ENCODE measurements at regions of chr4 and their contacts with region 1.

Region 1: GRCh38 chr4:44425614-44426208 is 22.9 kb downstream of the KCTD8 start:
- DNase-seq: peak; percentile 66
- ATAC-seq: peak; percentile 71
- H3K4me3 ChIP-seq: no peak overlapping the region
- H3K27ac ChIP-seq: no peak overlapping the region
- H3K4me1 ChIP-seq: no peaks in the 10 kb centered on the region
- H3K27me3 ChIP-seq: no peaks in the 10 kb centered on the region
- CTCF ChIP-seq: peak; percentile 82

Region 2: DNA sequence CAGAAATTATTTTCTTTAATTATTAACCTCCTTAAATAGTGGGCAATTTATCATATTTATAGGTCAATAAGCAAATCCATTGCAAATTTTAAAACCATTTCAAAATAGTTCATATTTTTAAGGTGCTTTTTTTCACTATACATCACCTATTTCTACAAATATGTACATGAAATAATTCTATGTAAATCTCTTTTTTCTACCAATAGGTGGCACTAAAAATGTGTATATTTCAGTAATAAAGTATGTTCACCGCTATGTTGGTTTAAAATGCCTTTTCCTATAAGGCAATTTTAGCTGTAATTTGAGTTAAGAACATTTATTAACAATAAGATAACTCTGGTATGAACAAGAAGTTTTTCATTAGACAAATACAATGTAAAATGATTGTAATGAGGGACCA is 649.3 kb before region 1 on chr4:
- CTCF ChIA-PET with region 1: interaction called, 3 read pairs
- POLR2A ChIA-PET with region 1: no interaction called
- intact Hi-C with region 1: loop called (anchors 1 kb)
- DNase-seq: peak; percentile 52
- ATAC-seq: no peak
- H3K4me3 ChIP-seq: no peak overlapping the region
- H3K27ac ChIP-seq: no peak overlapping the region
- H3K4me1 ChIP-seq: no peaks in the 10 kb centered on the region
- H3K27me3 ChIP-seq: no peaks in the 10 kb centered on the region
- CTCF ChIP-seq: peak; percentile 59

Region 3: DNA sequence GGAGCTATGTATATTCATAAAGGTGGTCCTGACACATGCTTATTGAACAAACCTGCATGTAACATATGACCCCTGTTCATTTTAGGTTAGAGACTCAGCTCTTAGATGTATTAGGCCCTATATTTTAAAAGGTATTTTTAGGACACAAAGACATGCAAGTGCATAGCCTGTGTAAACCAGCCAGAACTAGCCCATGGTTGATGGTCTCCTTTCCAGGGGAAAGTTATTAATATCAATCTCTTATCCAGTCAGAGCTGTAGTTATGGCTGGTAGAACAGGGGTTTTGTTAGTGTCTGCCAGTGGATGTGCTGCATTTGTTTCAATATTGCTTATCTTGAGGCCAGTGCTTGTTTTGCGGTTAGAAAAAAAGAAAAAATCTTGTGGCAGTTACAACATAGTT is 465.7 kb before region 1 on chr4:
- CTCF ChIA-PET with region 1: no interaction called
- POLR2A ChIA-PET with region 1: no interaction called
- intact Hi-C with region 1: loop called (anchors 10 kb)
- DNase-seq: no peak
- ATAC-seq: no peak
- H3K4me3 ChIP-seq: no peak overlapping the region
- H3K27ac ChIP-seq: no peak overlapping the region
- H3K4me1 ChIP-seq: no peaks in the 10 kb centered on the region
- H3K27me3 ChIP-seq: no peaks in the 10 kb centered on the region
- CTCF ChIP-seq: no peak

Region 4: DNA sequence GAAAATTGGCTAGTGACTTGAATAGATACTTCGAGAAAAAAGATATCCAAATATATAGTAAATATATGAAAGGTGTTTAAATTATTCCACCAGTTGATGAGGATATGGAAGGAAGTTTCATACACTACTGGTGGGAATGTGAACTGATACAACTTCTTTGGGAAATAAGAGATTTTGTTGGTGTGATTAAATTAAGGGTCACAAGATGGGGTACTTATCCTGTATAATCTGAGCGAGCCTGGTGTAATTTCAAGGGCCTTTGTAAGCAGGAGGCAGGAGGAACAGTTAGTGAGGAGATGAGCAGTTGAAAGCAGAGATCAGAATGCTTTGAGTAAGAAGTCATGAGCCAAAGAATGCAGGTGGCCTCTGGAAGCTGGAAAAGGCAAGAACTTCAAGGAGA is 169.3 kb before region 1 on chr4:
- CTCF ChIA-PET with region 1: no interaction called
- POLR2A ChIA-PET with region 1: no interaction called
- intact Hi-C with region 1: loop called (anchors 1 kb)
- DNase-seq: peak; percentile 8
- ATAC-seq: peak; percentile 37; the same call in 1 of the 2 replicates
- H3K4me3 ChIP-seq: no peak overlapping the region
- H3K27ac ChIP-seq: no peak overlapping the region
- H3K4me1 ChIP-seq: no peaks in the 10 kb centered on the region
- H3K27me3 ChIP-seq: no peaks in the 10 kb centered on the region
- CTCF ChIP-seq: 0 out of 2 replicates have a peak, but pooled peaks have one; percentile 17

Region 5: DNA sequence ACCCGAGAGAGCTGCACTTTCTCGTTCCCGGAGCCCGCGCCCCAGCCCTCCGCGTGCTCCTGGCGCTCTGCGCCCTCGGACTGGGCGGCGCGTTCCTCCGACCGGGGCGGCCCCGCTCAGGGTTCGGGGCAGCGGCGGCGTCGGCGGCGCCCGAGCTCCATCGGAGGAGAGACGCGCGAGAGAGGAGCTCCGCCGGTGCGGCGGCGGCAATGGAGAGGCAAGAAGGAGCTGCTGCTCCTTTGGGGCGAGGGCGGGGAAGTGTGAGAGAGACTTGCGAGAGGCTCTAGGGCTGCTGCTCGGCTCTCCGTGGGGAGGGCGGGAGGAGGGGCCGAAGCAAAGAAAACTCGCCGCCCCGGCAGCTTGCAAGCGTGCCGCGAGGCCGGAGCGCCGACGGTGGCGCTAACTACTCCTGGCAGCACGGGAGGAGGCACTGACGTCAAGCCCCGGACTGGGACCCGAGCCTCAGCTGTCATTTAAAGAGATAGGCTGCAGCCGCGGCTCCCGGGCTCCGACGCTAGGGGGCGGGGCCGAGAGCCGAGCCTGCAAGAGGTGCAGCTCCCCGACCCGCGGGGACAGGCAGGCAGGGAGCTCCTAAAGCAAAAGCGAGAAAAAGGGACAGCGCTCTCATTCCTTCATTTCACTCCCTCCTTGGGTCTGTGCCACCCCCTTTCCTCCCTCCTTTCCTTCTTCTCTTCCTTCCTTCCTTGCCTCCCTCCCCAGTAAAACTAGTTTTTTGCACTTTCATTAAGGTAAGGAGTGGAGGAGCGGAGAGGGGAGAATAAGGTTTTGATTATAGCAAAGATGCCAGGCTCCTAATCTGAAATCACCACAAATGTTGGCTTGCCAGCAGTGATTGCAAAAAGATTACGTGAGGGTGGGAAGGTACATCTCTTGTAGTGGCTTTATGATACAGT is 23.1 kb after region 1 on chr4 and contains the start of gene KCTD8:
- CTCF ChIA-PET with region 1: no interaction called
- POLR2A ChIA-PET with region 1: no interaction called
- intact Hi-C with region 1: no loop called
- DNase-seq: peak; percentile 87
- ATAC-seq: peak; percentile 84
- H3K4me3 ChIP-seq: peak within 1 kb of the TSS; percentile 83
- H3K27ac ChIP-seq: peak within 1 kb of the TSS; percentile 26; the same call in 1 of the 2 replicates
- H3K4me1 ChIP-seq: no peaks in the 10 kb centered on the region
- H3K27me3 ChIP-seq: no peaks in the 10 kb centered on the region
- CTCF ChIP-seq: peak; percentile 70
- total RNA-seq, gene KCTD8: 0.35 TPM in 1 of 2 replicates, not detected in the other

Region 6: GRCh38 chr4:44616621-44617020 is 190.9 kb after region 1 on chr4:
- CTCF ChIA-PET with region 1: no interaction called
- POLR2A ChIA-PET with region 1: no interaction called
- intact Hi-C with region 1: no loop called
- DNase-seq: no peak
- ATAC-seq: no peak
- H3K4me3 ChIP-seq: no peak overlapping the region
- H3K27ac ChIP-seq: no peak overlapping the region
- H3K4me1 ChIP-seq: no peaks in the 10 kb centered on the region
- H3K27me3 ChIP-seq: no peaks in the 10 kb centered on the region
- CTCF ChIP-seq: no peak

Region 7: DNA sequence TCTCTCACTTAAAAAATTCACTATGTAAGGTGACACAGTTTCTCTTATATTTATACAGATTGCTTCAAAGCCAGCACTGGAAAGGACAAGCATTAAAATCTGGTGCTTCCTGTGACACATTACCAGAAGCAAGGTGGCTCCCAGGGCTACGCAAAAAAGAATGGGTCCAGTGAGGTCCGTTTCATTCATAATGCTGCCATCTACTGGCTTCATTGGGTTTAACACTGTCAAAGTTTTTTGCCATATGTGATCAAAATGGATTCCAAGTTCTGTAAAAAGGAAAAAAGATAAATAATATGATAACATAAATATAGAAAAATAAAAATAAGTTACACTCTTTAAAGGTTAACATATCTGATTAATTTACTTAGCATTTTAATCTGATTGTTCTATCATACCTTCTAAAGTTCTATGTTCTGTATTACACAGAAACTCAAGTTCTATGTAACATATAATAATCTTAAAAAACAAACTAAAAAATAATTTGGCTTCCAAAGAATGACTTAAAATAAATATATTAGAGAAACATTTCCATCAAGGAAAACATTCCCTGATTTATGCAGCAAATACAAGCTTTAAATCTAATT is 203.7 kb after region 1 on chr4:
- CTCF ChIA-PET with region 1: no interaction called
- POLR2A ChIA-PET with region 1: no interaction called
- intact Hi-C with region 1: loop called (anchors 2 kb)
- DNase-seq: peak; percentile 81
- ATAC-seq: peak; percentile 77
- H3K4me3 ChIP-seq: no peak overlapping the region
- H3K27ac ChIP-seq: no peak overlapping the region
- H3K4me1 ChIP-seq: no peaks in the 10 kb centered on the region
- H3K27me3 ChIP-seq: no peaks in the 10 kb centered on the region
- CTCF ChIP-seq: peak; percentile 62

Measured in PC-3 (cell line).